ENCODE measurements at regions of chr20 and their contacts with region 1.

Region 1: GRCh38 chr20:8131598-8132483 is at the start of gene PLCB1:
- DNase-seq: peak; percentile 92
- total RNA-seq, gene PLCB1: 7.3 TPM

Region 2: GRCh38 chr20:7866285-7866684 is 265.6 kb before region 1 on chr20:
- intact Hi-C with region 1: no loop called
- DNase-seq: no peak

Region 3: DNA sequence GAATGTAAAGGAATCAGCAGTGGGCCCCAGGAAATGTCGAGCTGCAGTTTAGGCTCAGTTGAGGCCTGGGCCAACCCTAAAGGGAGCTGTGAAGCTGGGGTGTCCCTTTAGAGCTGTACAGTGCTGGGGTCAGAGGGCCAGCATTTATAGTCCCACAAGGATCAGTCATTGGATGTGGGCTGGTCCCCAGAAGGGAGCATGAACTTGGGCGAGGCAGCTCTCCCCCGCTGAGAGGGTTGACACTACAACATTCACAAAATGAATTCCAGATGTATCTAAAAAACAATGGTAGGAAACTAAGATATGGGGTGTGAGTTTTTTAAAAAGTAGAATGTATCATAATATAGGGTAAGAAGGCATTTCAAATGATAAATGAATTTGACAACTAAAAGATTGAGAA is 82.5 kb before region 1 on chr20:
- intact Hi-C with region 1: loop called (anchors 5 kb)
- DNase-seq: no peak

Region 4: DNA sequence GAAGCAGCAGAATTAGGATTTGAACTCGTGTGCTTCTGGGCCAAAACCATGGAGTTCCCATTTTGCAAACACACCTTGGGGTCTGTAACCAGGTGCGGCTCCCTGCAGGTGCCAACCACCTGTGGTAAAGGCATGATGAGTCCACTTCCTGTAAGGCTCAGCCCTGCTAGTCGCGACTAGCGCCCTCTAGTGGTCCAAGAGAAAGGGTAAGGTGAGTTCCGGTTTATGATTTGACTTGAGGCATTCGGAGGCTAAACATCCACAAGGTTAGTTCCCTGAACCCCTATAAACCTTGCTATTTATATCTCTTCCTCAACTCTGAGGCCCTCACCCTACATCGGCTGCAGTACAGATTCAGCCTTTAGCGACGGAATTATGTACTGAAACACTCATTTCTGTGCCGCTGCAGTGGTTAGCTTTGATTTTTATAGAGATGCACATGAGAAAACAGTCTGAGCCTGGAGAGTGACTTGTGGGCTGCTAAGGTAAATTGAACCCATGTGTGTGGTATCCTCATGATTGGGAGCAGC is 173.7 kb after region 1 on chr20:
- intact Hi-C with region 1: loop called (anchors 5 kb)
- DNase-seq: peak; percentile 79

Region 5: DNA sequence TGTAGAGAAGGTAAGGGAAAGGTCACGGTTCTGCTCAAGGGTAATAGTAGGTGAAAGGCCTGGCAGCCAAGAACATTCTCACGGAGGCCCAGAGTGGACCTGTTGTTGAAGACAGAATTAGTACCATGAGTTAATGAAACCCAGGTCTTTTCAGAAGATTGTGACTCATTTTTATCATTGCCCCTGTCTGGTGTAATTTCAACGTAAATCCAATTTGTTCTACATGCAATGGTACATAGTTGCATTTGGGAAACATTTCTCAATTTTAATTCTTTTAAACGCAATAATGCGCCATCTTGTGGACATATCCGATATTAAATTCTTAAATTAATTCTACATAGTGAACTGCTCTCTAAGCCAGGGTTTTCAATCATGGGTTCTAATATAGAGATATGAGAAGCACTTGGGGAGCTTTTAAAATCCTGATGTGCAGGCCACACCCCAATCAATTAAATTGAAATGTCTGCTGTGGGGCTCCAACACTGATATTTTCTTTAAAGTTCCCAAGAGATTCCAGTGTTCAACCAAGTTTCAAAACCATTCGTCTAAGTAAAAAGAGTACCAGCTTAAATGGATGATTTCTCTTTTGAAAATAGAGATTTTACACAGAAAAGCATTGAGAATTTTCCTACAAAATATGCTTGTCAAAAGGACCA is 257.7 kb after region 1 on chr20:
- intact Hi-C with region 1: loop called (anchors 5 kb)
- DNase-seq: no peak

Region 6: DNA sequence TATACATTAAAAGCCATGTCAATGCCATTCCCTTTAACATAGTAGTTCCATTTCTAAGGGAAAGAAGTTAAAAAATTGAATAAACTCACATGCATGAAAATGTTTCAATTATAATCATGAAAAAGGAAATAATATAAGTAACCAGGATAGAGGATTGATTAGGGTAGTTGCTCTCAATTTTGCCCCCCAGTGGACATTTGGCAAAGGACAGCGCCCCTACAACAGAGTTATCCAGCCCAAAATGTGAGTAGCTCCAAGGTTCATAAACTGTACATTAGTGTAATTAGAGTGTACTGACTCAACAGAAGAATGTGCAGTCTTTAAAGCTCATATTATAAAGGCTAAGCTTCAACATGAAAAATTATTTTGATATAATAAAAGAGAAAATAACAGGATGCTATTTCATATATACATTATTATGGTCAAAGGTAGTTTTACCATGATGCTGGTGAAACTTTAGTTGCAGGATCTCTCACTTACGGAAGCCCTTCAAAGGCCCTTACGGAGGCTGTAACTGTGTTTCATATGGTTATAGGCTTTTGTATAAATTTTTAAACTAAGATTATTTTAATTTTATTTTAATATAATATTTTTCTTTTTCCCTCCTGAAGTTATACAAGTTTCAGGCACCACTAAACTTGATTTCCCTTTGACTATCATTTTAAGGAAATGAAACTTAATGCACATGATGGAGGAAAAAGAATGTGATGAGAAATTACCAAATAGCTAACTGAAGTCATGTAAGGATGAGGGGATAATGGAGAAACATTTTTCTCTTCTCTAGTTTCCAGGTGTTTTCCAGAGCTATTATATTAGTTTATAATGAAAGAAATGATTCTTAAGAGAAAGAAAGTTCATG is 403.8 kb after region 1 on chr20:
- intact Hi-C with region 1: loop called (anchors 10 kb)
- DNase-seq: no peak

Region 7: DNA sequence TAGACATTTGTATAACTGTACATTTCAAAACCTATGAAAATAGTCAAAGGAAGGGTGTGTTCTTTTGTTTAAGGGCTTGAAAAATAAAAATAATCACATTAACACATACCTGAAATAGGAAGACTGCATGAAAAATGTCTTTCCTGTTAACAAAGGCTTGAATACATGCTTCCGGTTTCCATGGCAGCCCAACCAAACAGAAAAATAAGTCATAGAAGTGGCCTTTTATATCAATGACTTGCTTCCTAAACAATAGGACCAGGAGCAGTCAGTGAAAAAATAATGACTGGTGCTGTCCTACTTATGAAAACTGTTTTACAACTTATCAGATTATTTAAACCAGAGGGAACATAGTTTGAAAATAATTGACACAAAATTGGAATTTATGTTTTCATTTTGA is 524.5 kb after region 1 on chr20:
- intact Hi-C with region 1: loop called (anchors 10 kb)
- DNase-seq: no peak

Region 8: GRCh38 chr20:8722276-8722928 is 590.6 kb after region 1 on chr20:
- intact Hi-C with region 1: loop called (anchors 2 kb)
- DNase-seq: no peak